ENCODE measurements at regions of chr16 and their contacts with region 1.

Region 1: GRCh38 chr16:3383045-3383448 is 17.8 kb downstream of the ZSCAN32 start:
- DNase-seq: no peak
- ATAC-seq: no peak
- H3K4me3 ChIP-seq: no peak overlapping the region
- H3K27ac ChIP-seq: no peak overlapping the region
- H3K4me1 ChIP-seq: no peaks in the 10 kb centered on the region
- H3K27me3 ChIP-seq: no peaks in the 10 kb centered on the region
- CTCF ChIP-seq: no peak

Region 2: GRCh38 chr16:3317315-3317999 is 65.6 kb before region 1 on chr16:
- intact Hi-C with region 1: loop called (anchors 10 kb)
- DNase-seq: no peak
- ATAC-seq: no peak
- H3K4me3 ChIP-seq: no peak overlapping the region
- H3K27ac ChIP-seq: no peak overlapping the region
- H3K4me1 ChIP-seq: no peaks in the 10 kb centered on the region
- H3K27me3 ChIP-seq: no peaks in the 10 kb centered on the region
- CTCF ChIP-seq: no peak

Measured in upper lobe of right lung (tissue), 1 donor.